CD4-positive, alpha-beta T cell (primary cell): ENCODE measurements at regions of chr17 and their contacts with region 1.

Region 1: GRCh38 chr17:45385331-45385997 is 47.2 kb downstream of the ARHGAP27 start:
- DNase-seq: peak; percentile 77 to 97 (median 88)
- ATAC-seq: peak; percentile 97
- H3K4me3 ChIP-seq: no peak overlapping the region
- H3K4me3 Mint-ChIP-seq: no peak overlapping the region
- H3K27ac ChIP-seq: no peak overlapping the region
- H3K27ac Mint-ChIP-seq: no peak overlapping the region
- H3K4me1 ChIP-seq: peaks cover 10% of the 10 kb centered on the region
- H3K4me1 Mint-ChIP-seq: peaks cover 4% of the 10 kb centered on the region
- H3K27me3 ChIP-seq: no peaks in the 10 kb centered on the region
- H3K27me3 Mint-ChIP-seq: peaks cover 12% of the 10 kb centered on the region
- CTCF ChIP-seq: peak; percentile 95

Region 2: GRCh38 chr17:45307290-45308015 is 78.0 kb before region 1 on chr17:
- CTCF ChIA-PET with region 1: interaction called, 11 read pairs
- POLR2A ChIA-PET with region 1: no interaction called
- intact Hi-C with region 1: no loop called
- DNase-seq: peak in 6 of 14 experiments; percentile 18 to 66 (median 42)
- ATAC-seq: peak; percentile 72
- H3K4me3 ChIP-seq: no peak overlapping the region
- H3K4me3 Mint-ChIP-seq: peak overlapping the region; percentile 66
- H3K27ac ChIP-seq: peak overlapping the region; percentile 26 to 38
- H3K27ac Mint-ChIP-seq: peak overlapping the region; percentile 82
- H3K4me1 ChIP-seq: peaks cover 85% of the 10 kb centered on the region
- H3K4me1 Mint-ChIP-seq: peaks cover 83% of the 10 kb centered on the region
- H3K27me3 ChIP-seq: no peaks in the 10 kb centered on the region
- H3K27me3 Mint-ChIP-seq: no peaks in the 10 kb centered on the region
- CTCF ChIP-seq: no peak

Region 3: GRCh38 chr17:45325810-45326209 is 59.7 kb before region 1 on chr17:
- CTCF ChIA-PET with region 1: interaction called, 11 read pairs
- POLR2A ChIA-PET with region 1: no interaction called
- intact Hi-C with region 1: no loop called
- DNase-seq: no peak
- ATAC-seq: no peak
- H3K4me3 ChIP-seq: no peak overlapping the region
- H3K4me3 Mint-ChIP-seq: no peak overlapping the region
- H3K27ac ChIP-seq: no peak overlapping the region
- H3K27ac Mint-ChIP-seq: no peak overlapping the region
- H3K4me1 ChIP-seq: peaks cover 14% of the 10 kb centered on the region
- H3K4me1 Mint-ChIP-seq: peaks cover 20% of the 10 kb centered on the region
- H3K27me3 ChIP-seq: no peaks in the 10 kb centered on the region
- H3K27me3 Mint-ChIP-seq: no peaks in the 10 kb centered on the region
- CTCF ChIP-seq: no peak

Region 4: GRCh38 chr17:46212634-46213435 is 827.4 kb after region 1 on chr17:
- CTCF ChIA-PET with region 1: no interaction called
- POLR2A ChIA-PET with region 1: no interaction called
- intact Hi-C with region 1: no loop called
- DNase-seq: peak in 13 of 14 experiments; percentile 33 to 89 (median 52)
- ATAC-seq: peak; percentile 93
- H3K4me3 ChIP-seq: no peak overlapping the region
- H3K4me3 Mint-ChIP-seq: no peak overlapping the region
- H3K27ac ChIP-seq: no peak overlapping the region
- H3K27ac Mint-ChIP-seq: peak overlapping the region; percentile 30
- H3K4me1 ChIP-seq: peaks cover 6% of the 10 kb centered on the region
- H3K4me1 Mint-ChIP-seq: peaks cover 22% of the 10 kb centered on the region
- H3K27me3 ChIP-seq: no peaks in the 10 kb centered on the region
- H3K27me3 Mint-ChIP-seq: no peaks in the 10 kb centered on the region
- CTCF ChIP-seq: peak; percentile 81